Calu3 (cell line): ENCODE measurements at regions of chr16 and their contacts with region 1.

Region 1: GRCh38 chr16:74275002-74275636 is 21.5 kb upstream of the PSMD7 start:
- DNase-seq: no peak
- H3K4me3 Mint-ChIP-seq: no peak overlapping the region
- H3K27ac Mint-ChIP-seq: no peak overlapping the region
- H3K4me1 Mint-ChIP-seq: no peaks in the 10 kb centered on the region
- H3K27me3 Mint-ChIP-seq: peaks cover 68% of the 10 kb centered on the region
- CTCF ChIP-seq: peak; percentile 32

Region 2: GRCh38 chr16:74064120-74064735 is 210.9 kb before region 1 on chr16:
- CTCF ChIA-PET with region 1: interaction called, 5 read pairs
- intact Hi-C with region 1: loop called (anchors 10 kb)
- DNase-seq: no peak
- H3K4me3 Mint-ChIP-seq: no peak overlapping the region
- H3K27ac Mint-ChIP-seq: no peak overlapping the region
- H3K4me1 Mint-ChIP-seq: no peaks in the 10 kb centered on the region
- H3K27me3 Mint-ChIP-seq: peaks cover 57% of the 10 kb centered on the region
- CTCF ChIP-seq: no peak